B cell (primary cell): ENCODE measurements at regions of chr17 and their contacts with region 1.

Region 1: GRCh38 chr17:80991645-80992076 is at the start of gene CHMP6:
- DNase-seq: peak; percentile 91
- ATAC-seq: peak; percentile 68
- H3K4me3 ChIP-seq: peak within 1 kb of the TSS; percentile 68 to 88 (median 78)
- H3K4me3 Mint-ChIP-seq: peak within 1 kb of the TSS; percentile 85
- H3K27ac ChIP-seq: peak within 1 kb of the TSS; percentile 39 to 46
- H3K27ac Mint-ChIP-seq: peak within 1 kb of the TSS; percentile 84
- H3K4me1 ChIP-seq: peaks cover 27 to 50% of the 10 kb centered on the region in 2 donors
- H3K4me1 Mint-ChIP-seq: peaks cover 38% of the 10 kb centered on the region
- H3K27me3 ChIP-seq: no peaks in the 10 kb centered on the region
- H3K27me3 Mint-ChIP-seq: no peaks in the 10 kb centered on the region
- CTCF ChIP-seq: peak; percentile 27
- total RNA-seq, gene CHMP6: 43.0 and 46.2 TPM in 2 replicates

Region 2: GRCh38 chr17:80892019-80892855 is 99.4 kb before region 1 on chr17:
- CTCF ChIA-PET with region 1: no interaction called
- POLR2A ChIA-PET with region 1: no interaction called
- intact Hi-C with region 1: no loop called
- DNase-seq: peak; percentile 52
- ATAC-seq: peak; percentile 80
- H3K4me3 ChIP-seq: no peak overlapping the region
- H3K4me3 Mint-ChIP-seq: peak overlapping the region; percentile 37
- H3K27ac ChIP-seq: no peak overlapping the region
- H3K27ac Mint-ChIP-seq: peak overlapping the region; percentile 82
- H3K4me1 ChIP-seq: peaks cover 0 to 17% of the 10 kb centered on the region in 2 donors
- H3K4me1 Mint-ChIP-seq: peaks cover 14% of the 10 kb centered on the region
- H3K27me3 ChIP-seq: no peaks in the 10 kb centered on the region
- H3K27me3 Mint-ChIP-seq: no peaks in the 10 kb centered on the region
- CTCF ChIP-seq: no peak

Region 3: DNA sequence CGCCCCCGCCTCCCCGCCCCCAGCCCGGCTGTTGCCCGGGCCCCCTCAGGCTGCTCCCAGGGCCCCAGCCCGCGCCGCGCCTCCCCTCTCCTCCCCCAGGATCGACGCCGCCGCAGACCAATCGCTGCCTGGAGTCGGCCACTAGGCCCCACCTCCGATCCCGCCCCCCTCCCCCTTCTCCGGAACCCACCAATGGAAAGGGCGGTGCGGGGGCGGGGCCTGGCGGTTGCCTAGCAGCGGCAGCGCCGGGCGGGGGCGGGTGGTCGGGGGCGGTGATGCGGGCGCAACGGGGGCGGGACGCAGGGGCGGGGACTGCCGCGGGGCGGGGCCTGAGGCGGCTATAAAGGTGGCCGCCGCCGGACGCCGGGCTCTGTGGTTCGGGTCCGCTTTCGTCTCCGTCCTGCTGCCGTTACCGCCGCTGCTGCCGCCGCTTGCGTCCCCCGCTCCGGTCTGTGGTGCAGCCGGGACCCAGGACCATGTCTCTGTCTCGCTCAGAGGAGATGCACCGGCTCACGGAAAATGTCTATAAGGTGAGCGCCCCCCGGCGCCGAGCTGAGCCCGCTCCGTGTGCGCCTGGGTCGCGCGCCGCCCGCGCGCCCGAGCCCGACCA is 43.2 kb after region 1 on chr17 and contains the start of gene BAIAP2:
- CTCF ChIA-PET with region 1: interaction called, 4 read pairs
- POLR2A ChIA-PET with region 1: no interaction called
- intact Hi-C with region 1: loop called (anchors 5 kb)
- DNase-seq: peak; percentile 94
- ATAC-seq: peak; percentile 85
- H3K4me3 ChIP-seq: peak within 1 kb of the TSS; percentile 21 to 70 (median 61)
- H3K4me3 Mint-ChIP-seq: peak within 1 kb of the TSS; percentile 95
- H3K27ac ChIP-seq: no peak within 1 kb of the TSS
- H3K27ac Mint-ChIP-seq: peak within 1 kb of the TSS; percentile 90
- H3K4me1 ChIP-seq: peaks cover 12 to 16% of the 10 kb centered on the region in 2 donors
- H3K4me1 Mint-ChIP-seq: peaks cover 13% of the 10 kb centered on the region
- H3K27me3 ChIP-seq: peaks cover 0 to 68% (median 14%) of the 10 kb centered on the region in 4 experiments
- H3K27me3 Mint-ChIP-seq: peaks cover 55% of the 10 kb centered on the region
- CTCF ChIP-seq: no peak
- total RNA-seq, gene BAIAP2: 11.2 and 12.0 TPM in 2 replicates

Region 4: DNA sequence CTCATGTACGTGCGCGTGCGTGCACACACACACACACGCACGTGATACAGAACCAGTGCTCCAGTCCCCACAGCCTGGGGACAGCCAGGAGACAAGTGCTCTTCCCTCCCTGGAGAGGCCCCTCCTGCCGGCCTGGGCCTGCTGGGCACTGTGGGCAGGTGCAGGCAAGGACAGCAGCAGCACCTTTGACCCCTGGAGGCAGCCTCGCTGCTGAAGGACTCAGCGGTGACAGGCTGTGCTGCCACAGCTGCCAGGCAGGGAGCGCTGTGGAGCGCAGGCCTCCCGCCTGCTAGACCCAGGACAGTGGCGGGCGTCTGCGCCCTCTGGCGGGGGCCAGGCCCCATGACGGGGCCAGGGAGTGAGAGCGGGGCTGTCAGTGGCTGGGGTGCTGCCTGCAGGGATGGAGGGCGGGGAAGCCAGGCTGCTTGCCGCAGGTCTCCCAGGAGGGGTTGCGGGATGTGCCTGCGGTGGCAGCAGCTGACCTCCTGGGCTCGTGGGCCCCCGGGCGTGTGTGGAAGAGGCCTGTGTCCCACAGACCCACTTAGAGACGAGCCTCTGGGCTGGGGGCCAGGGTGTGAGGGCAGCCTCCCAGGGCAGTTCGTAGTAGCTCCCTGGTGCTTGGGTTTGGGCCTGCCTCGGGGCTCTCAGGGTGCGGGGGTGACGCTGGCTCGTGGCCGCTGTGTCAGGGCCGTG is 110.1 kb after region 1 on chr17:
- CTCF ChIA-PET with region 1: interaction called, 25 read pairs
- POLR2A ChIA-PET with region 1: no interaction called
- intact Hi-C with region 1: no loop called
- DNase-seq: peak; percentile 89
- ATAC-seq: peak; percentile 100
- H3K4me3 ChIP-seq: no peak overlapping the region
- H3K4me3 Mint-ChIP-seq: no peak overlapping the region
- H3K27ac ChIP-seq: no peak overlapping the region
- H3K27ac Mint-ChIP-seq: no peak overlapping the region
- H3K4me1 ChIP-seq: peaks cover 0 to 7% of the 10 kb centered on the region in 2 donors
- H3K4me1 Mint-ChIP-seq: no peaks in the 10 kb centered on the region
- H3K27me3 ChIP-seq: peaks cover 0 to 17% (median 2%) of the 10 kb centered on the region in 4 experiments
- H3K27me3 Mint-ChIP-seq: peaks cover 4% of the 10 kb centered on the region
- CTCF ChIP-seq: peak; percentile 100

Region 5: GRCh38 chr17:81142301-81143199 is 150.9 kb after region 1 on chr17:
- CTCF ChIA-PET with region 1: no interaction called
- POLR2A ChIA-PET with region 1: no interaction called
- intact Hi-C with region 1: no loop called
- DNase-seq: peak; percentile 79
- ATAC-seq: peak; percentile 73
- H3K4me3 ChIP-seq: no peak overlapping the region
- H3K4me3 Mint-ChIP-seq: no peak overlapping the region
- H3K27ac ChIP-seq: no peak overlapping the region
- H3K27ac Mint-ChIP-seq: no peak overlapping the region
- H3K4me1 ChIP-seq: no peaks in the 10 kb centered on the region
- H3K4me1 Mint-ChIP-seq: peaks cover 2% of the 10 kb centered on the region
- H3K27me3 ChIP-seq: peaks cover 0 to 4% (median 0%) of the 10 kb centered on the region in 4 experiments
- H3K27me3 Mint-ChIP-seq: peaks cover 3% of the 10 kb centered on the region
- CTCF ChIP-seq: peak; percentile 73